Heart right ventricle (tissue), 16 donors: ENCODE measurements at regions of chrX and their contacts with region 1.

Region 1: GRCh38 chrX:124194901-124195300 is 137.6 kb upstream of the TEX13D start:
- DNase-seq: no peak
- ATAC-seq: peak; percentile 46 to 84 (median 67)
- H3K4me3 ChIP-seq: no peak overlapping the region
- H3K27ac ChIP-seq: peak overlapping the region in 8 of 10 donors; percentile 14 to 73 (median 46)
- H3K4me1 ChIP-seq: peaks cover 0 to 16% (median 0%) of the 10 kb centered on the region in 9 donors
- H3K27me3 ChIP-seq: no peaks in the 10 kb centered on the region
- CTCF ChIP-seq: no peak

Region 2: GRCh38 chrX:124249345-124249744 is 54.4 kb after region 1 on chrX:
- intact Hi-C with region 1: loop called in 1 of 10 experiments (anchors 5 kb)
- DNase-seq: no peak
- ATAC-seq: no peak
- H3K4me3 ChIP-seq: no peak overlapping the region
- H3K27ac ChIP-seq: no peak overlapping the region
- H3K4me1 ChIP-seq: no peaks in the 10 kb centered on the region
- H3K27me3 ChIP-seq: no peaks in the 10 kb centered on the region
- CTCF ChIP-seq: no peak